ENCODE measurements at regions of chr6 and their contacts with region 1.

Region 1: GRCh38 chr6:46221222-46221793 is 50.5 kb upstream of the ENPP5 start:
- H3K4me3 Mint-ChIP-seq: no peak overlapping the region
- H3K27ac Mint-ChIP-seq: no peak overlapping the region
- H3K4me1 Mint-ChIP-seq: peaks cover 24% of the 10 kb centered on the region
- H3K27me3 Mint-ChIP-seq: peaks cover 14% of the 10 kb centered on the region

Region 2: DNA sequence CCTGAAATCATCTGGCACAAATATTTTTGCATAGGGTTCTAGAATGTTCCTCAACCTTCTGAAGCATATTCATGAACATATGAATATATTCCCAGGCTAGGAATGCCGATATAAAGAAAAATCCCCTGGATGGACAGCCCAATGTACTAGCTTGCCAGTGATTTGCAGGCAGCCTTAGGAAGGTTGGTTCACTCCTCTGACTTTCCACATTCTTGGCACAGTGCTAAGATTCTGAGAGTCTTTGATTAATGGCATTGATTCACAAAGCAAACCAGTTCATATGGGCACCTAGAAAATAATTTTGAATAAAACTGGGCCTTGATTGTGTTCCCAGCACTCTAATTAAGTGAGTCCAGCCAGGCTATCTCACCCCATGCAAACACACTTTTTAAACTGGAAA is 148.4 kb before region 1 on chr6:
- intact Hi-C with region 1: no loop called
- H3K4me3 Mint-ChIP-seq: no peak overlapping the region
- H3K27ac Mint-ChIP-seq: no peak overlapping the region
- H3K4me1 Mint-ChIP-seq: no peaks in the 10 kb centered on the region
- H3K27me3 Mint-ChIP-seq: no peaks in the 10 kb centered on the region

Region 3: DNA sequence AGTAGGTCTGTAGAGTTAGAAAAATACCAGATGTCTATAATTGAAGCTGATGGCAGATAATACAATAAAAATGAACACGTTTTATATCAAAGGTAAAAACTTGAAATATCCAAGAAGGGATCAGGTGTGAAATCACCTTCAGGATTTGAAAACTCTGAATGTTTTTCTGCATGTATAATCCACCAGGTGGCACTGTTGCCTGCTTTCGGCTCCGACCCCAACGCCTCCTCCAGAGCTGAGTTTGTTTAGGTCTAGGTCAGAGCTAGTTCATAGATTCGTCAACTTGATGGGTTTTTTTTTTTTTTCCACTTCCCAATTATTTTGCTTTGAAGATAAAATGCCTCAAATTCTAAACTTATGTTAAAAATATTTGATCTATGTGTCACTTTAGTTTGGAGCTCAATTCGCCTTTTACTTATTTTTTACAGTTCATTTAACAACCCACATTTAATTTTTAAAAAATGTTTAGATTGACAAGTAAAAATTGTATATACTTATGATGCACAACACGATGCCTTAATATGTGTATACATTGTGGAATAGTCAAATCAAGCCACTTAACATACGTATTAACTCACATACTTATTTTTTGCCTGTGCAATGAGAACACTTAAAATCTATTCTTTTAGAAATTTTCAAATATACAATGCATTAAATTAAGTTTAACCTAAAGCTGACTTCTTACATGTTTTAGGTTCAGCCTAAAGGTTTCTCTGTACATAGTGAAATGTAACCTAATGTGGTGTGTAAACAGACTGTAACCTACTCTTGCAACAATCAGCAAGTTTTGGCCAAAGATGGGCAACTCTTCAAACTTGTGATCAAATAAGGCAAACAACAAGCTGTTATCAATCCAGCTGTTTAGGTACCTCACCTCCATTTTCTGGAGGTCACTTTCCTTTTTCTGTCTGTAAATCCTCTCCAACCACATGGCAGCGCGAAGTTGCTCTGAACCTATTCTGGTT is 130.9 kb before region 1 on chr6:
- intact Hi-C with region 1: loop called (anchors 5 kb)
- H3K4me3 Mint-ChIP-seq: no peak overlapping the region
- H3K27ac Mint-ChIP-seq: no peak overlapping the region
- H3K4me1 Mint-ChIP-seq: no peaks in the 10 kb centered on the region
- H3K27me3 Mint-ChIP-seq: peaks cover 12% of the 10 kb centered on the region

Region 4: DNA sequence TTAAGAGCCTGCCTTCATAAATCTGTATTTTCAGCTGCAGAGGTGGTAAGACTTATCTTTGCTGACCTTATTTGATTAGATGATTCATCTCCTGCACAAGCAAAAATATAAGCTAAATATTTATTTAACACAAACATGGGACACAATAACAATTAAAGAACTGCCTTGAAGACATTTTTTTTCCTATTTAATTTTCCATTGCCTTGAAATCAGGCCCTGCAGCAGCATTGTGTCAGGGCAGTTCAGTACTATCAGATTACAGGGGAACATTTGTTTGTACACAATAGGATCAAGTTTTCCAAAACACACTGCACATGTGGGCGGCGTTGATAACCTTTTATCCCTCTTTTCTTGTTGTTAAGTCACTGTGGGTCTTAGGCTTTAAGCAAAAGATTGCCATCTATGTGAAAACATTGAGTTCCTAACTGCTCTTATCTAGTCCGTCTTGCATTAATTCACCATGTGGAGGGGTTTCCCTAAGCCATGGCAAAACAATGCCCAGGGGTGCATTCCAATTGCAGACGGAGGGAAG is 693.0 kb after region 1 on chr6:
- intact Hi-C with region 1: no loop called
- H3K4me3 Mint-ChIP-seq: no peak overlapping the region
- H3K27ac Mint-ChIP-seq: no peak overlapping the region
- H3K4me1 Mint-ChIP-seq: no peaks in the 10 kb centered on the region
- H3K27me3 Mint-ChIP-seq: no peaks in the 10 kb centered on the region